ENCODE measurements at regions of chr10 and their contacts with region 1.

Region 1: DNA sequence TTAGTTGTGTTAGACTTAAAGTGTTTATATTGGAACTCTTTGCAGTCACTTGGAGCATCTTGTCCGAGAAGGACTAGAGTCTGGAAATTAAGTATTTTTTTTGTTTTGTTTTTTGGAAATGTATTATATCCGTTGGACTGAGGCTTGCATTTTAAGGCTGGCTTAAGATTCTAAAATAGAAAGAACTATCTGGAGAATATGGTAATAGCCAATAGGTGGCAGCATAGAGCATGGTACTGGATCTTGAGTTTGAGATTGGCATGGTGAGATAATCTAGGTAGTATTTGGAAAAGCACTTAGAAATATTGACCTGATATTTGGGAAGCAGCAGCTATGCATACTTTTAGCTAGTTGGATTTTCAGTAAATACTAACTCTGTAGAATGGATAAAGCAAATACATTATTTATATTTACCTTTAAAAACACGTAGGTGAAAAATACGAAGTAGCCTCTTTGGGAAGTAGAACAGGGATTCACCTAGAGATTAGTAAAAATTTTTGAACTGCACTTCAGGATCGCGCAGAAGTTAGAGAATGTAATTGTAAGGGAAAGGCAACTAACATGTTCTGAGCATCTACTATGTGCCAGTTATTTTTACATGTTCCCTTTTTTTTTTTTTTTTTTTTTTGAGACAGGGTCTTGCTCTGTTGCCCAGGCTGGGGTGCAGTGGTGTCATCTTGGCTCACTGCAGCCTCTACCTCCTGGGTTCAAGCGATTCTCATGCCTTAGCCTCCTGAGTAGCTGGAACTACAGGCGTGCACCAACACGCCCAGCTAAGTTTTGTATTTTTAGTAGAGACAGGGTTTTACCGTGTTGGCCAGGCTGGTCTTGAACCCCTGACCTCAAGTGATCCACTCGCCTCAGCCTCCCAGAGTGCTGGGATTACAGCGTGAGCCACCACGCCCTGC is 78.6 kb downstream of the LCOR start:
- DNase-seq: peak; percentile 15
- ATAC-seq: peak; percentile 80
- H3K4me3 Mint-ChIP-seq: no peak overlapping the region
- H3K27ac Mint-ChIP-seq: no peak overlapping the region
- H3K4me1 Mint-ChIP-seq: peaks cover 33% of the 10 kb centered on the region
- H3K27me3 Mint-ChIP-seq: no peaks in the 10 kb centered on the region
- CTCF ChIP-seq: peak; percentile 65

Region 2: DNA sequence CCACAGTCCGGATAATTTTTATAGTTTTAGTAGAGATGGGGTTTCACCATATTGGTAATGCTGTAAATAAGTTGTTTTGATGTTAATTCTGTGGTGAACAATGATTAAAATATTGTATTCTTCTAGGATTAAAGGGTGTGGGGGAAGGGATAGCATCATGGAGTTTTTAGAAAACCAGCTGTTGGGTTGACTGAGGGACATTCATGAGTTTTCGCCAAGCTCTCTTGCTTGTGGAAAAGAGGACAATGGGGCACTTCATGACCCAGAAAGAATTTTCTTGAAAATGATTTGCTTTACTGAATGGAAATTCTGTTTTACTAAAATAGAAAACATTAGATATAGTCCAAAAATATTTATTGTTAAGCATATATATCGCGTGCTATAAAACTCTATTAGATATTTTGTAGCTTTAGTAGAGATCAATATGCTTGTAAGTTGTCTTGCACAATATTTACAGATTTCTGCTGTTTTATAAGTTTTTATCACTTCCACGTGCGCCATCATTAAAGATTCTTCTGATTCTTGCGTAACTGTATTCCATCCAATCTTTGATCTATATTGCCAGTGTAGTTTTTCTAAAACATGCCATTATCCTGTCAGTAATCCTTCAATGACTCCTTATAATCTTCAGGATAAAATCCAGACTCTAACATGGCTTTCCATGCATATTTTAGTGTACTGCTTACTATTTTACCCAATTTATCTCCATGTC is 36.8 kb before region 1 on chr10:
- CTCF ChIA-PET with region 1: interaction called, 13 read pairs
- POLR2A ChIA-PET with region 1: no interaction called
- intact Hi-C with region 1: no loop called
- DNase-seq: no peak
- ATAC-seq: no peak
- H3K4me3 Mint-ChIP-seq: no peak overlapping the region
- H3K27ac Mint-ChIP-seq: peak overlapping the region; percentile 79
- H3K4me1 Mint-ChIP-seq: peaks cover 57% of the 10 kb centered on the region
- H3K27me3 Mint-ChIP-seq: no peaks in the 10 kb centered on the region
- CTCF ChIP-seq: no peak

Region 3: GRCh38 chr10:96896884-96897589 is 13.7 kb before region 1 on chr10:
- CTCF ChIA-PET with region 1: interaction called, 10 read pairs
- POLR2A ChIA-PET with region 1: no interaction called
- intact Hi-C with region 1: no loop called
- DNase-seq: no peak
- ATAC-seq: peak; percentile 74
- H3K4me3 Mint-ChIP-seq: no peak overlapping the region
- H3K27ac Mint-ChIP-seq: peak overlapping the region; percentile 46
- H3K4me1 Mint-ChIP-seq: peaks cover 53% of the 10 kb centered on the region
- H3K27me3 Mint-ChIP-seq: no peaks in the 10 kb centered on the region
- CTCF ChIP-seq: no peak

Measured in activated CD8-positive, alpha-beta T cell treated with anti-CD3 and anti-CD28 coated beads for 36 hours (primary cell).